Activated B cell treated with CpG ODN at 0.5 μM for 24 hours (primary cell): ENCODE measurements at regions of chr11 and their contacts with region 1.

Region 1: DNA sequence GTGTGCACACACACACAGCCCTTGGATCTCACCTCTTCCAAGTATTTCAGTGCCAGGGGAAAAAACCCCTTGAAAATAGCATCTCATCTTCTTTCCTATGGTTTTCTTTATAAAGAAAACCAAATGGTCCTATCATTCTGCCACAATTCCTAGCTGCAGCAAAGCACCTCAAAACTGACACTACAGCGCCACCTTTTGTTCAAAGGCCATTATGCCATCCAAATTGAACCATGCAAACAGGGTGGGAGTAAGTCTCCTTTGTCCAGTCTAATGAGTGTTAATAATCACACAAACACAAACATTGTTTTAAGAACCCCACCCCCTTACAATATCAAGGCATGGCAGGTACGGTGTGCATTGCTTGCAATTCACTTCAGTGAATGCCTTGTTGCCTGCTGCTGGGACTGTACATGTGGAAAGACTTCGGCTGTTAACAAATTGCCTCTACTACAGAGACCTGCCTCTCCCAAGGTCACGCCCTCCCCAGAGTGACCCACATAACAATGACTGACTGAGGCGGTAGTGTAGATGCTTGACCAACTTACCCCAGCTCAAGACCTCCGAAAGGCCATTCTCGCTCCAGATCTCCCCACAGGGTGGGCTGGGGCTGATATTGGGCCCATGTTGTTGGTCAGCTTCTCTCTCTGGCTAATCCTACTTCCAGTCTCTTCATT is 31.7 kb downstream of the FAM181B start:
- DNase-seq: no peak
- ATAC-seq: no peak
- H3K4me3 Mint-ChIP-seq: no peak overlapping the region
- H3K27ac Mint-ChIP-seq: no peak overlapping the region
- H3K4me1 Mint-ChIP-seq: no peaks in the 10 kb centered on the region
- H3K27me3 Mint-ChIP-seq: peaks cover 3% of the 10 kb centered on the region
- CTCF ChIP-seq: no peak

Region 2: DNA sequence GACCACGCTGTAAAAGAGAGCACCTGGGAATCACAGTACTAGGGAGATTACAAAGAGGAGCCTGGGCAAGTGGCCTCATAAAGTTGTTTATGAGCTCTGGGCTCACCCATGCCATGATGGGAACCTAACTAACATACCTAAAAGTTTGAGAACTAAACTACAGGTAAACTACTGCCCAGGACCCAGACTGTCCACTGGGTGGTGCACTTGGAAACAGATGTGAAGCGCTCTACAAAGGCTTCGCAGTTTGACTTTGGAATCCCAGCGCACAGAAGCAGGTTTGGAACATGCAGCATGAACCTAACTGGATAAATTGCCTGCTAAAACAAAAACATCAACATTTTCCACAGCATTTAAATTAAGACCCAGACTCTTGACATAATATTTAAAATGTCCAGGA is 386.9 kb before region 1 on chr11:
- CTCF ChIA-PET with region 1: no interaction called
- POLR2A ChIA-PET with region 1: no interaction called
- intact Hi-C with region 1: loop called (anchors 10 kb)
- DNase-seq: no peak
- ATAC-seq: no peak
- H3K4me3 Mint-ChIP-seq: no peak overlapping the region
- H3K27ac Mint-ChIP-seq: no peak overlapping the region
- H3K4me1 Mint-ChIP-seq: no peaks in the 10 kb centered on the region
- H3K27me3 Mint-ChIP-seq: no peaks in the 10 kb centered on the region
- CTCF ChIP-seq: no peak

Region 3: GRCh38 chr11:82494988-82495432 is 207.0 kb before region 1 on chr11:
- CTCF ChIA-PET with region 1: interaction called, 4 read pairs
- POLR2A ChIA-PET with region 1: no interaction called
- intact Hi-C with region 1: loop called (anchors 2 kb)
- DNase-seq: no peak
- ATAC-seq: no peak
- H3K4me3 Mint-ChIP-seq: no peak overlapping the region
- H3K27ac Mint-ChIP-seq: no peak overlapping the region
- H3K4me1 Mint-ChIP-seq: no peaks in the 10 kb centered on the region
- H3K27me3 Mint-ChIP-seq: no peaks in the 10 kb centered on the region
- CTCF ChIP-seq: no peak